Transverse colon (tissue), 4 donors: ENCODE measurements at regions of chr20 and their contacts with region 1.

Region 1: DNA sequence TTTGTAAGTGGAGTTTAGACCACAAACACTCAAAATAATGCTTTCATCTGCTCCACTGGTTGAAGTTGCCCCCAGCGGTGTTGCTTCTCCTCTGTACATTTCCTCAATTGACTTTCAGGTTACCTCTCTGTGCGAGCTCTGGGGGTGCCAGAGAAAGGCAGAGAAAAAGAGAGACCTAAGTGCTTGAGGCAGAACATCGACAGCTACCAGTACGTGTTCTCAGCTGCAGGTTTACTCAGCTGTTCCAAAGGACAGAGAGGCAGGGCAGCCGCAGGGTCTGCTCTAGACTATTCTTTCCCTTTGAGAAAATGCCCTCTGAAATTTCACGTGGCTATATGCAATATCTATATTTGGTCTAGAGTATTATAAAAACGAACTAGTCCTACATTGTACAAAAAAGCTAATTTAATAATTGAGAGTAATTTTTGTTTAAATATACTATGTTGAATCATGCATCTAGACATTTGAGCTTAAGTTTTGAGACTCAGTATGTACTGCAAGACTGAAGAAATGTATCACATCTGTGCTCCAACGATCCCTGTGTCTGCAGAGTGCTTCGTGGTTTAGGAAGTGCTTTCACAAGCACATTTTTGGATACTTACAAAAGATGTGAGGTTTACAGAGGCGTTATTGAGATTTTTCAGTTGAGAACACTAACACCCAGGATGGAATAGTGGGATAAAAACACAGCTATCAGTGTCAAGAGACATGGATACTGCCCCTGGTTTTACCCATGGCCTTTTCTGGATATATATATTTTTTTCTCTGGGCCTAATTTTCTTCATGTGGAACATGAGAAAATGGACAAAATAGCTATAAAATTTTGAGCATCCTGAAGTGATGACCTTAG is 453.6 kb upstream of the FLRT3 start:
- DNase-seq: no peak
- H3K4me3 ChIP-seq: no peak overlapping the region
- H3K27ac ChIP-seq: no peak overlapping the region
- H3K4me1 ChIP-seq: no peaks in the 10 kb centered on the region
- H3K27me3 ChIP-seq: no peaks in the 10 kb centered on the region
- CTCF ChIP-seq: no peak
- EP300 ChIP-seq: no peak
- POLR2A ChIP-seq: no peak

Region 2: GRCh38 chr20:14778096-14778495 is 12.9 kb before region 1 on chr20:
- in situ Hi-C with region 1: no loop called
- intact Hi-C with region 1: loop called (anchors 1 kb)
- DNase-seq: no peak
- H3K4me3 ChIP-seq: no peak overlapping the region
- H3K27ac ChIP-seq: no peak overlapping the region
- H3K4me1 ChIP-seq: no peaks in the 10 kb centered on the region
- H3K27me3 ChIP-seq: no peaks in the 10 kb centered on the region
- CTCF ChIP-seq: no peak
- EP300 ChIP-seq: no peak
- POLR2A ChIP-seq: no peak